ENCODE measurements at regions of chr11 and their contacts with region 1.

Region 1: GRCh38 chr11:103266167-103266831 is 157.1 kb downstream of the DYNC2H1 start:
- DNase-seq: no peak
- ATAC-seq: no peak
- H3K4me3 ChIP-seq: no peak overlapping the region
- H3K27ac ChIP-seq: no peak overlapping the region
- H3K4me1 ChIP-seq: no peaks in the 10 kb centered on the region
- H3K27me3 ChIP-seq: no peaks in the 10 kb centered on the region
- CTCF ChIP-seq: no peak

Region 2: DNA sequence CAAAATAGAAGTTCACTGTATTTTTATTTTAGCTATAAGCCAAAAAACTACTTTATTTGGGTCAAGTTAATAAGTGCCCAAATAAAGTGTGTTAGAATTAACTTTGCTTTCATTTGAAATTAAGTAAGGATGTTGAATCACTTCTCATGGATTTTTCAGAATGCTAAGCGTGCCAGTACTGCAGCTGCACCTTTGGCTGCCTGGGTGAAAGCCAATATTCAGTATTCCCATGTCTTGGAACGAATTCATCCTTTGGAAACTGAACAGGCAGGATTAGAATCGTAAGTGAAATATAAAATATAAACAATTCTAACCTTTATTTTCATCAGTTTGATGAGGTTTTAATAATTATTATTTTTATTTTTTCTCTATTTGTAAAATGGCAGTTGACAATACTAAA is 43.5 kb before region 1 on chr11:
- intact Hi-C with region 1: loop called in 1 of 10 experiments (anchors 1 kb)
- DNase-seq: no peak
- ATAC-seq: no peak
- H3K4me3 ChIP-seq: no peak overlapping the region
- H3K27ac ChIP-seq: no peak overlapping the region
- H3K4me1 ChIP-seq: no peaks in the 10 kb centered on the region
- H3K27me3 ChIP-seq: no peaks in the 10 kb centered on the region
- CTCF ChIP-seq: no peak